ENCODE measurements at regions of chr11 and their contacts with region 1.

Region 1: GRCh38 chr11:125592305-125593112 is at the start of gene STT3A:
- DNase-seq: peak; percentile 99
- ATAC-seq: peak; percentile 92
- H3K4me3 ChIP-seq: peak within 1 kb of the TSS; percentile 72 to 97 (median 84)
- H3K4me3 Mint-ChIP-seq: peak within 1 kb of the TSS; percentile 94
- H3K27ac ChIP-seq: peak within 1 kb of the TSS; percentile 94 to 95
- H3K27ac Mint-ChIP-seq: peak within 1 kb of the TSS; percentile 97
- H3K4me1 ChIP-seq: peaks cover 27 to 28% of the 10 kb centered on the region in 2 donors
- H3K4me1 Mint-ChIP-seq: peaks cover 41% of the 10 kb centered on the region
- H3K27me3 ChIP-seq: no peaks in the 10 kb centered on the region
- H3K27me3 Mint-ChIP-seq: no peaks in the 10 kb centered on the region
- CTCF ChIP-seq: no peak
- total RNA-seq, gene STT3A: 76.1 and 78.4 TPM in 2 replicates

Region 2: GRCh38 chr11:125514336-125515101 is 78.0 kb before region 1 on chr11:
- CTCF ChIA-PET with region 1: no interaction called
- POLR2A ChIA-PET with region 1: no interaction called
- intact Hi-C with region 1: loop called (anchors 1 kb)
- DNase-seq: peak; percentile 87
- ATAC-seq: peak; percentile 76
- H3K4me3 ChIP-seq: peak overlapping the region in 1 of 5 experiments; percentile 32
- H3K4me3 Mint-ChIP-seq: peak overlapping the region; percentile 69
- H3K27ac ChIP-seq: peak overlapping the region; percentile 42 to 78
- H3K27ac Mint-ChIP-seq: peak overlapping the region; percentile 88
- H3K4me1 ChIP-seq: peaks cover 24 to 26% of the 10 kb centered on the region in 2 donors
- H3K4me1 Mint-ChIP-seq: peaks cover 34% of the 10 kb centered on the region
- H3K27me3 ChIP-seq: peaks cover 0 to 3% (median 0%) of the 10 kb centered on the region in 4 experiments
- H3K27me3 Mint-ChIP-seq: no peaks in the 10 kb centered on the region
- CTCF ChIP-seq: no peak

Region 3: DNA sequence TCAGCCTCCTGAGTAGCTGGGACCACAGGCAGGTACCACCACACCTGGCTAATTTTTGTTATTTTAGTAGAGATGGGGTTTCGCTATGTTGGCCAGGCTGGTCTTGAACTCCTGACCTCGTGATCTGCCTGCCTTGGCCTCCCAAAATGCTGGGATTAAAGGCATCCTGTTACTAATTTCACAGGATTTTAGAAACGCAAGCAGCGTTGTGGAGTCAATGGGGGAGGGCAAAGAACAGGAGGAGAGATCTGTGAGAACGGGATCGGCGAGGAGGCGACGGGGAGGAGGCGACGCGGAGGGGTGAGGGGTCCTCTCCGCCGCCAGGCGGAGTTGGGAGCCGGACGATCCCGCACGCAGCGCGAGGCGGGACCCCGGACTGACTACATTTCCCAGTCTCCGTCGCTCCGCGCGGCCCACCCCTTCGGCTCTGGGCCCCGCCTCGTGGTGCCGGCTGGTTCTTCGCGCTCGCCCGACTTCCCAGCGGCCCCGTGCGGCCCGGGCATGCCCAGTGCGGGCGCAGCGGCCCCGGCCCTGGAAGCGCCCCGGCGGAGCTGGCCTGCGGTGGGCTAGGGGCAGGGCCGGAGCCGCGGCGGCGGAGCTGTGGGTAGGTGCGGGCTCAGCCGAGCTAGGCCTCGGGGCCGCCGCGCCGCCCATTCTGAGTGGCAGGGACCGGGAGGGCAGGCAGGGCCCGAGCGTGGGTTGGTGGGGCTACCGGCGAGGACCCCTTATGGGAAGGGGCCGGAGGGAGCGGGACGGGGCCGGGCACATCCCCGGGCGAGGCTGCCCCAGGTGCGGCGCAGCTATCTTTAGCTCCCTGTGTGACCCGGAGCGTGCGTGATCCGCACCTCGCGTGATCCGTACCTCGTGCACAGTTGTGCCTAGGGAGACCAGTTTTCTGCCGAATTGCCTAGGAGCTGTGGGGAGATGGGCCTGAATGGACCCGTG is 23.3 kb before region 1 on chr11 and contains the start of gene EI24:
- CTCF ChIA-PET with region 1: interaction called, 10 read pairs
- POLR2A ChIA-PET with region 1: interaction called, 14 read pairs
- intact Hi-C with region 1: loop called (anchors 1 kb)
- DNase-seq: peak; percentile 93
- ATAC-seq: peak; percentile 99
- H3K4me3 ChIP-seq: peak within 1 kb of the TSS; percentile 68 to 91 (median 80)
- H3K4me3 Mint-ChIP-seq: peak within 1 kb of the TSS; percentile 96
- H3K27ac ChIP-seq: peak within 1 kb of the TSS; percentile 52 to 86
- H3K27ac Mint-ChIP-seq: peak within 1 kb of the TSS; percentile 91
- H3K4me1 ChIP-seq: peaks cover 11 to 16% of the 10 kb centered on the region in 2 donors
- H3K4me1 Mint-ChIP-seq: peaks cover 18% of the 10 kb centered on the region
- H3K27me3 ChIP-seq: no peaks in the 10 kb centered on the region
- H3K27me3 Mint-ChIP-seq: no peaks in the 10 kb centered on the region
- CTCF ChIP-seq: peak; percentile 68
- total RNA-seq, gene EI24: 20.2 and 21.9 TPM in 2 replicates

Region 4: DNA sequence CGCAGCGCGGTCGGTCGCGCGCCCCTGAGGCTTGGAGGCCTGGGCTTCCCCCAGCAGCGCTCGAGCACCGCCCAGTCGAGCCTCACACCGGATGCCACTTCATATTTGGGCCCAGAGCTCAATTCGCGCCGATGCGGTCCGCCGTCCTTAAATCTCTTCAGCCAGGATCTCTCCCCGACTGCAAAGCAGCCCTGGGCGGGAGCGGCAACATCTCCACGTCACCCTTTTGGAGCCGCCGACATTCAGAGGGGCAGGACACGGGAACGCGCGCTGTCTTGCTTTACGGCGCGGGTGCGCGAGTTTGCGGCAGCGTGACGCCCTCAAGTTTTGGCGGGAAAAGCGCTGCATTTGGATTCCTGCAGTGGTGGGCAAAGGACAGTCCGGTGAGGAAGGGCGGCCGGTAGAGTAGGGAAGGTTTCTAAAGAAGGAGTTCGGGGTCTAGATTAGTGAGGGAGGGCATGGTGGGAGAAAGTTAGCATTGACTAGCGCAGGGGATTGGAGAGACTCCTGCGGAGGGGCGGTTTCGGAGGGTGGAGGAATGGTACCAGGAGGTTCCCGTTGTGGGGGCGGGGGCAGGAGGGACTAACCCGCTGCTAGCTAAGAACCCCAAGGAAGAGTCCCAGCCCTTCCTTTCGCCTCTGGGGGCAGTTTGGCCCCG is 33.2 kb after region 1 on chr11:
- CTCF ChIA-PET with region 1: no interaction called
- POLR2A ChIA-PET with region 1: interaction called, 5 read pairs
- intact Hi-C with region 1: loop called (anchors 1 kb)
- DNase-seq: peak; percentile 90
- ATAC-seq: peak; percentile 90
- H3K4me3 ChIP-seq: peak overlapping the region; percentile 81 to 96 (median 94)
- H3K4me3 Mint-ChIP-seq: peak overlapping the region; percentile 95
- H3K27ac ChIP-seq: peak overlapping the region; percentile 97 to 98
- H3K27ac Mint-ChIP-seq: peak overlapping the region; percentile 98
- H3K4me1 ChIP-seq: peaks cover 11 to 18% of the 10 kb centered on the region in 2 donors
- H3K4me1 Mint-ChIP-seq: peaks cover 14% of the 10 kb centered on the region
- H3K27me3 ChIP-seq: no peaks in the 10 kb centered on the region
- H3K27me3 Mint-ChIP-seq: no peaks in the 10 kb centered on the region
- CTCF ChIP-seq: no peak

Region 5: GRCh38 chr11:125902927-125903710 is 310.6 kb after region 1 on chr11 and contains the start of gene PUS3:
- CTCF ChIA-PET with region 1: no interaction called
- POLR2A ChIA-PET with region 1: no interaction called
- intact Hi-C with region 1: loop called (anchors 1 kb)
- DNase-seq: peak; percentile 89
- ATAC-seq: peak; percentile 96
- H3K4me3 ChIP-seq: peak within 1 kb of the TSS; percentile 67 to 98 (median 81)
- H3K4me3 Mint-ChIP-seq: peak within 1 kb of the TSS; percentile 97
- H3K27ac ChIP-seq: peak within 1 kb of the TSS; percentile 45 to 75
- H3K27ac Mint-ChIP-seq: peak within 1 kb of the TSS; percentile 82
- H3K4me1 ChIP-seq: peaks cover 23 to 26% of the 10 kb centered on the region in 2 donors
- H3K4me1 Mint-ChIP-seq: peaks cover 24% of the 10 kb centered on the region
- H3K27me3 ChIP-seq: peaks cover 0 to 25% (median 18%) of the 10 kb centered on the region in 4 experiments
- H3K27me3 Mint-ChIP-seq: peaks cover 32% of the 10 kb centered on the region
- CTCF ChIP-seq: no peak
- total RNA-seq, gene PUS3: 7.8 and 8.1 TPM in 2 replicates

Region 6: DNA sequence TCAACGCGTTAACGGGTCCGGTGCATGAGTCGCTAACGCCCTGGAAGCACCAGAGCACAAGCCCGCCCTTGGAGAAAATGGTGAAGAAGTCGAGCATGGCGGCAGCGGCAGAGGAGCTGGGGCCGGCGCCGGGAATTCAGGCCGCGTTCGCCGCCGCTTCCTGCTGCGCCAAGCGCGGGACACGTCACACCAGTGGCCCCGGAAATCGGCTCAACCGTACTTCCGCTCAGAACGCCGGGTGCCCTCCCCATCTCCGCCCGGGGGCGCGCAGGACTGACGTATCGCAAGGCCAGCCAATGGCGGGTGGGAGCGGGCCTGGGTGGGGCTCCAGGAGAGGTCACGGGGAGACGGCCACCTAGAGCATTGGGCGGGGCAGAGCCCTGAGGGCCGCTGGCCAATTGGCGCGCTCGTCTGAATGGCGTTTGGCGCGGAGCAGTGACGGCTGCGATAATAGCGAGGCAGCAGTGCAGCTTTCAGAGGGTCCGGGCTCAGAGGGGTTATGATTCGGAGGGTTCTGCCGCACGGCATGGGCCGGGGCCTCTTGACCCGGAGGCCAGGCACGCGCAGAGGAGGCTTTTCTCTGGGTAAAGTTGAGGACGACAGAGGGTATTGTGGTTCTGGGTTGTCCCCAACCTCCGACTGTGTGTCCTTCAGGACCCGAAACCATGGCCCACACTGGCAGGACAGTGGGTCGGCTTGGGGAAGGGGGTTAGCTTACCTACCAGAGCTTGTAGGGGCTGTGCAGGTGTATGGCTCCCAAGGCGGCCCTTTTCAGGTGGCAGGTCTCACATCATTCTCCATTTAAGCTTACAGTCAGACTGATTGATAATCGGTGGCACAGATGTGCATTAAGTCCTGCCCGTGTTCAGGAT is 676.4 kb after region 1 on chr11 and contains the starts of genes FOXRED1 and SRPRA:
- CTCF ChIA-PET with region 1: no interaction called
- POLR2A ChIA-PET with region 1: no interaction called
- intact Hi-C with region 1: loop called (anchors 10 kb)
- DNase-seq: peak; percentile 99
- ATAC-seq: peak; percentile 99
- H3K4me3 ChIP-seq: peak within 1 kb of the TSS; percentile 83 to 98 (median 89)
- H3K4me3 Mint-ChIP-seq: peak within 1 kb of the TSS; percentile 96
- H3K27ac ChIP-seq: peak within 1 kb of the TSS; percentile 94 to 95
- H3K27ac Mint-ChIP-seq: peak within 1 kb of the TSS; percentile 93
- H3K4me1 ChIP-seq: peaks cover 14 to 20% of the 10 kb centered on the region in 2 donors
- H3K4me1 Mint-ChIP-seq: peaks cover 36% of the 10 kb centered on the region
- H3K27me3 ChIP-seq: no peaks in the 10 kb centered on the region
- H3K27me3 Mint-ChIP-seq: no peaks in the 10 kb centered on the region
- CTCF ChIP-seq: no peak
- total RNA-seq, gene FOXRED1: 44.4 and 46.0 TPM in 2 replicates
- total RNA-seq, gene SRPRA: 129 and 136 TPM in 2 replicates

Measured in B cell (primary cell).